PC-9 (cell line): ENCODE measurements at regions of chr20 and their contacts with region 1.

Region 1: DNA sequence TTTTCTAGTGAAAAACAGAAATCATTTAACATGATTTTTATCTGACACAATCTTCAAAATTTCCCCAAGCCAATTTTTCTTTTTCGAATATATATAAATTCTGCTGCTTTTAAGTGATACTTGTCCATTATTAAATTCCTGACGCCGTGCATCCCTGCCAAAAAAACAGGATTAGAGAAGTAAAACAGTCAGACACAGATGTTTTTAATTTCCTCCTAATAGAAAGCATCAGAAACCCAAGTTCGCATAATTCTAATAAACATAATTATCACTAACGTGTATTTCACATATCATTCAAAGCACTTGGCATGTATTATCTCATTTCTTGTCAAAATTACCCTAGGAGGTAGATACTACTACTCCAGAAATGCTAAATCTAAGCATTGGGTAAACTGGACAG is 179.5 kb downstream of the ZFP64 start:
- DNase-seq: no peak
- H3K4me3 ChIP-seq: no peak overlapping the region
- H3K27ac ChIP-seq: no peak overlapping the region
- H3K4me1 ChIP-seq: no peaks in the 10 kb centered on the region
- H3K27me3 ChIP-seq: no peaks in the 10 kb centered on the region
- CTCF ChIP-seq: no peak

Region 2: DNA sequence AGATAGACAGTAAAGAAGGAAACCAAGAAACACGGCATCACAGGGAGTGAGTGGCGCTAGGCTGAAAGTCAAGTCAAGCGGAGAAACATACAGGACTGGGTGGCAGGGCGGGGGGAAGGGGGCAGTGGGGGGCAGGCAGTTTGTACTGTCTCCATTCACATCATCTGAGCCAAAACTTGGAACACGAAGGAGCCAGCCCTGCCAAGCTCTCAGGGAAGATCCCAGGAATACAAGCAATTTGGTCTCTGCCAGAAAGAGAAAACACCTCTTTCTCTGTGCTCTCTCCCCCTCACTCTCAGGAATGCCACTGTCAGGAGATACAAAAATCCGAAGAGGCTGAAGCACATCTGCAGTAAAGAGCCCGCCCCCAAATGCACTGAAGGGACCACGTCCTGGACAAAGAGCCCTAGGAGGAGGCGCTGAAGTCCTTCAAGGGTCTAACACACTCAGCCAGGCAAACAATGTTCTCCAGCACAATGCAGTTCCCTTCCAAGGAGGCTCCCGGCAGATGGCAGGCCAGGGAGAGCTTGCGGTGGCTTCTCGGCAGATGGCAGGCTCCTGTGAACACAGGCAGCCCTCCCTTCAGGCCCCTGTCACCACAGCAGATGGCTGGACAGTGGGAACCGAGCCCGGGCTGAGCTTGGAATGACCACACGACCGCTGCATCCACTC is 333.9 kb before region 1 on chr20:
- CTCF ChIA-PET with region 1: no interaction called
- POLR2A ChIA-PET with region 1: no interaction called
- intact Hi-C with region 1: no loop called
- DNase-seq: no peak
- H3K4me3 ChIP-seq: no peak overlapping the region
- H3K27ac ChIP-seq: no peak overlapping the region
- H3K4me1 ChIP-seq: no peaks in the 10 kb centered on the region
- H3K27me3 ChIP-seq: no peaks in the 10 kb centered on the region
- CTCF ChIP-seq: no peak

Region 3: GRCh38 chr20:52031563-52032303 is 19.7 kb after region 1 on chr20:
- CTCF ChIA-PET with region 1: no interaction called
- POLR2A ChIA-PET with region 1: interaction called, 10 read pairs
- intact Hi-C with region 1: no loop called
- DNase-seq: no peak
- H3K4me3 ChIP-seq: no peak overlapping the region
- H3K27ac ChIP-seq: no peak overlapping the region
- H3K4me1 ChIP-seq: no peaks in the 10 kb centered on the region
- H3K27me3 ChIP-seq: no peaks in the 10 kb centered on the region
- CTCF ChIP-seq: no peak